ENCODE measurements at regions of chr22 and their contacts with region 1.

Region 1: GRCh38 chr22:19051381-19052072 is 70.7 kb downstream of the DGCR2 start:
- DNase-seq: peak in 1 of 4 experiments; percentile 41
- ATAC-seq: peak; percentile 83
- H3K4me3 ChIP-seq: no peak overlapping the region
- H3K27ac ChIP-seq: no peak overlapping the region
- H3K4me1 ChIP-seq: peaks cover 2 to 3% of the 10 kb centered on the region in 2 experiments; a peak in 3 of 5 replicates
- H3K27me3 ChIP-seq: no peaks in the 10 kb centered on the region
- CTCF ChIP-seq: no peak
- EP300 ChIP-seq: no peak
- POLR2A ChIP-seq: no peak
- RAD21 ChIP-seq: no peak

Region 2: GRCh38 chr22:19035474-19036228 is 15.9 kb before region 1 on chr22:
- CTCF ChIA-PET with region 1: no interaction called
- POLR2A ChIA-PET with region 1: interaction called, 37 read pairs
- in situ Hi-C with region 1: no loop called
- intact Hi-C with region 1: no loop called
- DNase-seq: peak; percentile 64 to 76 (median 69)
- ATAC-seq: peak; percentile 62
- H3K4me3 ChIP-seq: no peak overlapping the region
- H3K27ac ChIP-seq: no peak overlapping the region
- H3K4me1 ChIP-seq: peaks cover 0 to 27% of the 10 kb centered on the region in 2 experiments; a peak in 1 of 5 replicates
- H3K27me3 ChIP-seq: peaks cover 13 to 26% of the 10 kb centered on the region in 2 experiments; a peak in 4 of 5 replicates
- CTCF ChIP-seq: peak; percentile 39 to 63 (median 55); a peak in 5 of 6 replicates
- EP300 ChIP-seq: no peak
- POLR2A ChIP-seq: peak; percentile 72
- RAD21 ChIP-seq: peak in 1 of 2 experiments; percentile 57; a peak in 2 of 4 replicates

Region 3: DNA sequence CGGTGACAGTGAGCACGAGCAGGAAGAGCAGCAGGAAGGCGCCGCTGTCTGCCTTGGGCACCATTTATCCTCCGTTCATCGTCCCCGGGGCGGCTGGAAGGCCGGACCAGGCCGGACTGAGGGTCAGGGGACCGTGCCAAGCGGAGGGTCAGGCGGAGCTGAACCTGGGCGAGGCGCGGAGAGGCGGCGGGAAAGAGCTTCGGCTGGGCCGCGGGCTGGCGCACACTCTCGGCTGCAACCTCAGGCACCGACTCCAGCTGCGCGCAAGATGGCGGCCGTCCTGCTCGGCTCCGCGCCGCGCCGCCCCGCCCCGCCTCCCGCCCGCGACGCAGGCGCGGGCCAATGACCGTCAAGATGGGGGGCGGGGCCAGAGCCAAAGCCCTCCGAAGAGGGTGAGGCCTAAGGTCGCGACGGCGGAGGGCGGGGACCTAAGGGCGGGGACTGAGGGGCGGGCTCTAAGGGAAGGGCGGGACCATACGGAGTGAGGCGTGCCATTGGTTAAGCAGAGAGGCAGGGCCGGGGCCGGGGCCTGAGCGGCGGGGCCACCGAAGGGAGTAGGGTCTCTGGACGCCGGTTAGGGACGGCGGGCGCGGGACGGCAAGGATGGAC is 70.7 kb after region 1 on chr22 and contains the start of gene DGCR2:
- CTCF ChIA-PET with region 1: no interaction called
- POLR2A ChIA-PET with region 1: no interaction called
- in situ Hi-C with region 1: no loop called
- intact Hi-C with region 1: loop called (anchors 1 kb)
- DNase-seq: peak; percentile 100
- ATAC-seq: peak; percentile 96
- H3K4me3 ChIP-seq: peak within 1 kb of the TSS; percentile 77
- H3K27ac ChIP-seq: peak within 1 kb of the TSS; percentile 77
- H3K4me1 ChIP-seq: peaks cover 30 to 52% of the 10 kb centered on the region in 2 experiments
- H3K27me3 ChIP-seq: peaks cover 18 to 26% of the 10 kb centered on the region in 2 experiments; a peak in 4 of 5 replicates
- CTCF ChIP-seq: no peak; a peak in 1 of 6 replicates
- EP300 ChIP-seq: 0 out of 2 replicates have a peak, but pooled peaks have one; percentile 3
- POLR2A ChIP-seq: peak; percentile 98
- RAD21 ChIP-seq: no peak
- polyA plus RNA-seq, gene DGCR2: 0.69 to 0.70 TPM

Region 4: GRCh38 chr22:19750507-19751490 is 699.3 kb after region 1 on chr22:
- CTCF ChIA-PET with region 1: no interaction called
- POLR2A ChIA-PET with region 1: no interaction called
- in situ Hi-C with region 1: no loop called
- intact Hi-C with region 1: no loop called
- DNase-seq: no peak
- ATAC-seq: no peak
- H3K4me3 ChIP-seq: no peak overlapping the region
- H3K27ac ChIP-seq: no peak overlapping the region
- H3K4me1 ChIP-seq: peaks cover 5 to 70% of the 10 kb centered on the region in 2 experiments
- H3K27me3 ChIP-seq: peaks cover 56 to 82% of the 10 kb centered on the region in 2 experiments; a peak in 4 of 5 replicates
- CTCF ChIP-seq: no peak
- EP300 ChIP-seq: no peak
- POLR2A ChIP-seq: no peak
- RAD21 ChIP-seq: no peak

Measured in K562 (cell line).